ENCODE measurements at regions of chr5 and their contacts with region 1.

Region 1: DNA sequence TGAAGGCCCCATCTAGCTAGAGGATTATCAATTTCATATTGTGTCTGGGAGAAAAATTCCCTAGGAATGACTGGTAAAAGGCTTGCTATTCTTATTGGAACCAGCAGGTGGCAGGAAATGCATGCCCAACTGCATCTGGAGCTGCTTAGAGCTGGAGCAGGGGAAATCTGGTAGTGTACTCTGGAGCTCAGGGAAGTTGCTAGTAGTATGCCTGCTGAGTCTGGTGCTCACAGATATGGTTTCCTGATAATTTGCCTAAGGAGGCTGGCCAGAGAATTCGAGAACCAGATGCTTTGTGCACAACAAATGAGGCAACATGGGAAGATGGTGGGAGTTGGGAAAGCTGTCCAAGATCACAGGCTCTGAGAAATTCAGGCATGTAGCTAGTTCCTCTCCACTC is 53.7 kb downstream of the G3BP1 start:
- DNase-seq: peak; percentile 58

Region 2: GRCh38 chr5:151174612-151175101 is 650.8 kb before region 1 on chr5:
- in situ Hi-C with region 1: no loop called
- DNase-seq: no peak

Region 3: GRCh38 chr5:152142840-152143469 is 317.5 kb after region 1 on chr5:
- in situ Hi-C with region 1: loop called (anchors 25 kb)
- DNase-seq: peak; percentile 46

Region 4: DNA sequence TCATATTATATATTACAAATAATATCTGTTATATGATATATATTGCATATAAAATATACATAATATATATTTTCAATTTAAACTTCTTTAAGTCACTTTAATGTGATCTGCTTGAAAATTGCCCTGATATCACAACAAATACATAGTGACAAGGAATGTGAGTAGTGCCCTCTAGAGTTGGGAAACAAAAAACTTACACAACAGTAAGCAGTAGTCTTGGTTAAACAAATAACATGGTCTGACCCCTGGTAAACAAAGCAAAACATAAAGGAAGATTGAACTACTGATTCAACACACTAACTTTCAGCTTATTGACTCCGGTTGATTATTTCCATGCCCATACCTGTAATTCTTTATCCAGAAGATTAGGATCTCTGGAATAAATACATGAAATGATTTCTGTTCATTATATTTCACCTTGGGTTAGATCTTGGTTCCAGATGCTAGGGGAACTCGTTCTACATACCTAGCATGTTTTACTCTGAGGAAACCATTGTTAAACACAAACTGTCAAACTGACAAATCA is 768.0 kb after region 1 on chr5:
- in situ Hi-C with region 1: no loop called
- DNase-seq: no peak

Measured in KBM-7 (cell line).